CD4-positive, alpha-beta T cell (primary cell): ENCODE measurements at regions of chr10 and their contacts with region 1.

Region 1: DNA sequence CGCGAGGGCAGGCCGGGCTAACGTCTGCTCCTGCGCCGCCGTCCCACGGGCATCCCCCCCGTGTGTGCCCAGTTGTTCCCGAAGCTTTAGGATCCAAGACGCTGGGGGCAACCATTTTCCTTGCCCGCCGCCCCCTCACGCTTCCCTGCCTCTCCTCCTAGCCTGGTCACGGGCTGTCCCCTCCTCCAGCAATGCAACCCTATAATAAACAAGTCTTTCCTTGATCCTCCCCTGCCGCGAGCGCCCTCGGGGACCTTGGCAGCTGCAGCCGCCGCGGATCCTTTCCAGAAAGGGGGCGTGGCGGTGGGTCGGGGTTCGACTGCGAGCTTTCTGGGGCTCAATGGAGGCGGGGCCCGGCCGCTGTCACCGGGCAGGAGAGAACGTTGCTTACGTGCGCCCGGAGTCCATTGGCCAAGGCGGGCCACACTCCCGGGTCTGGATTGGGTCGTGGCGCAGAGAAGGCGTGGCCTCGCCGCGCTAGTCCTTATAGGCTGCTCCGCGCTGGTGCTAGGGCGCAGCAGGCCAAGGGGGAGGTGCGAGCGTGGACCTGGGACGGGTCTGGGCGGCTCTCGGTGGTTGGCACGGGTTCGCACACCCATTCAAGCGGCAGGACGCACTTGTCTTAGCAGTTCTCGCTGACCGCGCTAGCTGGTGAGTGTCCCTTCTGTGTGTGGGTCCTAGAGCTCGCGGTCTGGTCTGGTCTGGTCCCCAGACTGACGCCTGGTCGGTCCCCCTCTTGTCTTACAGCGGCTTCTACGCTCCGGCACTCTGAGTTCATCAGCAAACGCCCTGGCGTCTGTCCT is at the start of gene DDIT4:
- DNase-seq: peak; percentile 94 to 99 (median 97)
- ATAC-seq: peak; percentile 93
- H3K4me3 ChIP-seq: peak within 1 kb of the TSS; percentile 90
- H3K4me3 Mint-ChIP-seq: peak within 1 kb of the TSS; percentile 100
- H3K27ac ChIP-seq: peak within 1 kb of the TSS; percentile 78 to 88
- H3K27ac Mint-ChIP-seq: peak within 1 kb of the TSS; percentile 89
- H3K4me1 ChIP-seq: peaks cover 48% of the 10 kb centered on the region
- H3K4me1 Mint-ChIP-seq: peaks cover 64% of the 10 kb centered on the region
- H3K27me3 ChIP-seq: no peaks in the 10 kb centered on the region
- H3K27me3 Mint-ChIP-seq: no peaks in the 10 kb centered on the region
- CTCF ChIP-seq: no peak
- total RNA-seq, gene DDIT4: 427 to 436 TPM

Region 2: GRCh38 chr10:72077275-72077990 is 196.2 kb before region 1 on chr10:
- CTCF ChIA-PET with region 1: no interaction called
- POLR2A ChIA-PET with region 1: no interaction called
- intact Hi-C with region 1: no loop called
- DNase-seq: peak in 1 of 14 experiments; percentile 17
- ATAC-seq: no peak
- H3K4me3 ChIP-seq: no peak overlapping the region
- H3K4me3 Mint-ChIP-seq: peak overlapping the region; percentile 85
- H3K27ac ChIP-seq: peak overlapping the region; percentile 3 to 5
- H3K27ac Mint-ChIP-seq: peak overlapping the region; percentile 85
- H3K4me1 ChIP-seq: peaks cover 100% of the 10 kb centered on the region
- H3K4me1 Mint-ChIP-seq: peaks cover 94% of the 10 kb centered on the region
- H3K27me3 ChIP-seq: no peaks in the 10 kb centered on the region
- H3K27me3 Mint-ChIP-seq: no peaks in the 10 kb centered on the region
- CTCF ChIP-seq: no peak

Region 3: GRCh38 chr10:72234560-72235095 is 39.0 kb before region 1 on chr10:
- CTCF ChIA-PET with region 1: interaction called, 4 read pairs
- POLR2A ChIA-PET with region 1: interaction called, 4 read pairs
- intact Hi-C with region 1: loop called in 1 of 2 experiments (anchors 5 kb)
- DNase-seq: no peak
- ATAC-seq: no peak
- H3K4me3 ChIP-seq: no peak overlapping the region
- H3K4me3 Mint-ChIP-seq: no peak overlapping the region
- H3K27ac ChIP-seq: no peak overlapping the region
- H3K27ac Mint-ChIP-seq: no peak overlapping the region
- H3K4me1 ChIP-seq: peaks cover 5% of the 10 kb centered on the region
- H3K4me1 Mint-ChIP-seq: peaks cover 26% of the 10 kb centered on the region
- H3K27me3 ChIP-seq: no peaks in the 10 kb centered on the region
- H3K27me3 Mint-ChIP-seq: no peaks in the 10 kb centered on the region
- CTCF ChIP-seq: no peak

Region 4: DNA sequence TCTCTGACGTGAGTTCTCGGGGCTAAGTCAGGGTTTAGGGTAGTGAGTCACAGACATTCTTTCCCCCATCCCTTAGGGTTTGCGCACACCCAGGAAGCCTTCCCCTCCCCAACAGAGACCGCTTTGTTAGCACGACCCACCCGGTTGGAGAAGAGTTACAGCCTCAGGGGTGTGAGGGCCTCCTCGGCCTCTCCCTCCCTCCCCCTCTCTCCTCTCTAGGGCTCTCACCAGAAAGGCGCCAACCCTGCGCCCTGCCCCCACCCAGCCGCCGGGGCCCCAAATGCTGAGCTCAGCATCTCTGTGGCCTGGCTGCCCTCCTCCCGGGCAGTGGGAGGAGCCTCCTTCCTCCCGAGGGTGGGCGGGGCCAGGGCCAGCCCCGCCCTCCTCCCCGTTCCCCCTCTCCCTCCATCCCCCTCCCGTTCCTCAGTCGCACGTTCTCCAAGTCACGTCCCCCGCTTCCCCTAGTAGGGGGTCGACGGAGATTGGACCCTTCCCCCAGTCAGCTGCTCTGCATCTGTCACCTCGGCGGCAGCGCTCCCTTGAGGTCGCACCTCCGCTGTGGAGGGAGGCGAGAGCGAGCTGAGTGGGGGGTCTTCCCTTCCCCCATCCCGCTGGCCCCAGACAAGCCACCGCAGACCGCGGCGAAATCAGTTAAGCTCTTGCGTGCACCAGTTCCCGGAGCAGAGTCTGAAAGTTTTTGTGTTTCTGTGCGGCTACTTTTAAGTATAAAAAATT is 12.9 kb before region 1 on chr10:
- CTCF ChIA-PET with region 1: interaction called, 20 read pairs
- POLR2A ChIA-PET with region 1: interaction called, 53 read pairs
- intact Hi-C with region 1: loop called in 1 of 2 experiments (anchors 2 kb)
- DNase-seq: peak; percentile 64 to 91 (median 77)
- ATAC-seq: peak; percentile 76
- H3K4me3 ChIP-seq: peak overlapping the region; percentile 77
- H3K4me3 Mint-ChIP-seq: peak overlapping the region; percentile 84
- H3K27ac ChIP-seq: peak overlapping the region; percentile 68 to 80
- H3K27ac Mint-ChIP-seq: peak overlapping the region; percentile 85
- H3K4me1 ChIP-seq: peaks cover 80% of the 10 kb centered on the region
- H3K4me1 Mint-ChIP-seq: peaks cover 72% of the 10 kb centered on the region
- H3K27me3 ChIP-seq: no peaks in the 10 kb centered on the region
- H3K27me3 Mint-ChIP-seq: no peaks in the 10 kb centered on the region
- CTCF ChIP-seq: no peak

Region 5: GRCh38 chr10:72292223-72292691 is 18.6 kb after region 1 on chr10:
- CTCF ChIA-PET with region 1: interaction called, 8 read pairs
- POLR2A ChIA-PET with region 1: interaction called, 96 read pairs
- intact Hi-C with region 1: loop called in 1 of 2 experiments (anchors 1 kb)
- DNase-seq: peak in 2 of 14 experiments; percentile 33 to 35
- ATAC-seq: no peak
- H3K4me3 ChIP-seq: no peak overlapping the region
- H3K4me3 Mint-ChIP-seq: peak overlapping the region; percentile 27
- H3K27ac ChIP-seq: no peak overlapping the region
- H3K27ac Mint-ChIP-seq: peak overlapping the region; percentile 52
- H3K4me1 ChIP-seq: peaks cover 67% of the 10 kb centered on the region
- H3K4me1 Mint-ChIP-seq: peaks cover 62% of the 10 kb centered on the region
- H3K27me3 ChIP-seq: no peaks in the 10 kb centered on the region
- H3K27me3 Mint-ChIP-seq: no peaks in the 10 kb centered on the region
- CTCF ChIP-seq: no peak

Region 6: GRCh38 chr10:72319416-72320254 is 46.0 kb after region 1 on chr10:
- CTCF ChIA-PET with region 1: interaction called, 21 read pairs
- POLR2A ChIA-PET with region 1: interaction called, 93 read pairs
- intact Hi-C with region 1: loop called in 1 of 2 experiments (anchors 1 kb)
- DNase-seq: peak; percentile 77 to 95 (median 88)
- ATAC-seq: peak; percentile 65
- H3K4me3 ChIP-seq: peak overlapping the region; percentile 52
- H3K4me3 Mint-ChIP-seq: peak overlapping the region; percentile 57
- H3K27ac ChIP-seq: peak overlapping the region; percentile 86 to 95
- H3K27ac Mint-ChIP-seq: peak overlapping the region; percentile 91
- H3K4me1 ChIP-seq: peaks cover 93% of the 10 kb centered on the region
- H3K4me1 Mint-ChIP-seq: peaks cover 89% of the 10 kb centered on the region
- H3K27me3 ChIP-seq: no peaks in the 10 kb centered on the region
- H3K27me3 Mint-ChIP-seq: no peaks in the 10 kb centered on the region
- CTCF ChIP-seq: no peak